Cardiac septum (tissue), 1 donor: ENCODE measurements at regions of chr6 and their contacts with region 1.

Region 1: DNA sequence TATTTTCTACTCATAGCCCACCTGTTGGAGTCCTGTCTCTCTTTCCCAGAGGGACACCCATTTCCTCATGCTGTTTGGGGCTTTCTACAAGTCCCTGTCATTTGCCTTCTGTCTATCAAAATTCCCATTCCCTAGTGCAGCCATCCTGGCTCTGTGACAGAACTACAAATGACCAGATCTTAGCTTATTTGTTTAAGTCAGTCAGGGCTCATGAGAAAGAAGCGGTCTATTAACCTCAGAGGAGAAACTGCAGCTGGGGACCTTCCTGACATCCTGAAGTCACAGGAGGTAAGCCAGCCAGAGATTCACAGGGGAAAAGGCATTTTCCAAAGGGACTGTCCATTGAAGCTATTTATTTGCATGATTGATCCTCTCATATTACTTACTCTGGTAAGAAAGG is 1.7 kb upstream of the COL9A1 start:
- DNase-seq: no peak

Region 2: GRCh38 chr6:71012866-71013469 is 708.4 kb after region 1 on chr6:
- intact Hi-C with region 1: loop called (anchors 5 kb)
- DNase-seq: no peak